OCI-LY7 (cell line): ENCODE measurements at regions of chr6 and their contacts with region 1.

Region 1: GRCh38 chr6:26270903-26271667 is 93.9 kb upstream of the BTN3A2 start:
- DNase-seq: peak; percentile 98
- H3K4me3 ChIP-seq: peak overlapping the region; percentile 87
- H3K27ac ChIP-seq: peak overlapping the region; percentile 99
- H3K4me1 ChIP-seq: peaks cover 42% of the 10 kb centered on the region
- CTCF ChIP-seq: no peak; the same call in 1 of the 2 replicates

Region 2: DNA sequence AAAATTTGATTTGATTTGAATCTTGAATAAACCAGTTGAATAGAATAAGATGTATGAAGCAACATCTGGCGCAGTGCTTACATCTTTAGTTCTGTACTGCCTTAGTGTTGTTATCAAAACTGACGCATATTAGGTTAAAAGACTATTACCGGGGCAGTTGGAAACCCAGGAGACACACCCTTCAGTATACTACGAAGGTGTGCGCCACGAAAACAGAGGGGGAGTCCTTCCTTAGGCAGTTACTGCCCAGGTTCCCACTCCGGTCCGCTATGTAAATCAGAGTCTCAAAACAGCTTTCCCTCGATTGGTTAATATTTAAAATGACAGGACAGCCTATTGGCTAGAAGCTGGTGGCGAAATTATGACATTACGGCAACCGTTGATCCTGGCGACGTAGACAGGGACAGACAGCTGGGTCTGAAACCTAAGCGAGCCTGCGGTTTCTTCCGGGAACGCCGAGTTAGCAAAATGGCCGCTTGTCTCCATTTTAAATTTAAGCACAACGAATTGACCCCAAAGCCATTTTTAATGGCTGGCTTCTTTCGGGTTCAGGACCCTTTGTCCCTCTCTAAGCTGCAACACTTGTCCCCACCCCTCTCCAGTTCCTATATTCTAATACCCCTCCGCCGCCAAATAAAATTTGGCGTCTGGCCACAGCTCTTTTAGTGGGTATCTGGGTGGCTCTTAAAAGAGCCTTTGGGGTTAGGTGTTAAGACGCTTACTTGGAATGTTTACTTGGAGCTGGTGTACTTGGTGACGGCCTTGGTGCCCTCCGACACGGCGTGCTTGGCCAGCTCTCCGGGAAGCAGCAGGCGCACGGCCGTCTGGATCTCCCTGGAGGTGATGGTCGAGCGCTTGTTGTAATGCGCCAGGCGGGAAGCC is 148.1 kb before region 1 on chr6:
- CTCF ChIA-PET with region 1: no interaction called
- POLR2A ChIA-PET with region 1: interaction called, 19 read pairs
- intact Hi-C with region 1: loop called (anchors 2 kb)
- DNase-seq: peak; percentile 99
- H3K4me3 ChIP-seq: peak overlapping the region; percentile 72
- H3K27ac ChIP-seq: peak overlapping the region; percentile 99
- H3K4me1 ChIP-seq: peaks cover 60% of the 10 kb centered on the region
- CTCF ChIP-seq: no peak

Region 3: GRCh38 chr6:26204332-26205165 is 66.5 kb before region 1 on chr6:
- CTCF ChIA-PET with region 1: no interaction called
- POLR2A ChIA-PET with region 1: interaction called, 307 read pairs
- intact Hi-C with region 1: loop called (anchors 5 kb)
- DNase-seq: peak; percentile 98
- H3K4me3 ChIP-seq: peak overlapping the region; percentile 79
- H3K27ac ChIP-seq: peak overlapping the region; percentile 93
- H3K4me1 ChIP-seq: peaks cover 63% of the 10 kb centered on the region
- CTCF ChIP-seq: peak; percentile 61

Region 4: GRCh38 chr6:26234421-26235296 is 36.4 kb before region 1 on chr6:
- CTCF ChIA-PET with region 1: no interaction called
- POLR2A ChIA-PET with region 1: interaction called, 244 read pairs
- intact Hi-C with region 1: loop called (anchors 1 kb)
- DNase-seq: peak; percentile 90
- H3K4me3 ChIP-seq: peak overlapping the region; percentile 69
- H3K27ac ChIP-seq: peak overlapping the region; percentile 92
- H3K4me1 ChIP-seq: peaks cover 26% of the 10 kb centered on the region
- CTCF ChIP-seq: no peak

Region 5: GRCh38 chr6:26351544-26351953 is 80.5 kb after region 1 on chr6:
- CTCF ChIA-PET with region 1: no interaction called
- POLR2A ChIA-PET with region 1: no interaction called
- intact Hi-C with region 1: no loop called
- DNase-seq: no peak
- H3K4me3 ChIP-seq: no peak overlapping the region
- H3K27ac ChIP-seq: no peak overlapping the region
- H3K4me1 ChIP-seq: peaks cover 66% of the 10 kb centered on the region
- CTCF ChIP-seq: no peak

Region 6: DNA sequence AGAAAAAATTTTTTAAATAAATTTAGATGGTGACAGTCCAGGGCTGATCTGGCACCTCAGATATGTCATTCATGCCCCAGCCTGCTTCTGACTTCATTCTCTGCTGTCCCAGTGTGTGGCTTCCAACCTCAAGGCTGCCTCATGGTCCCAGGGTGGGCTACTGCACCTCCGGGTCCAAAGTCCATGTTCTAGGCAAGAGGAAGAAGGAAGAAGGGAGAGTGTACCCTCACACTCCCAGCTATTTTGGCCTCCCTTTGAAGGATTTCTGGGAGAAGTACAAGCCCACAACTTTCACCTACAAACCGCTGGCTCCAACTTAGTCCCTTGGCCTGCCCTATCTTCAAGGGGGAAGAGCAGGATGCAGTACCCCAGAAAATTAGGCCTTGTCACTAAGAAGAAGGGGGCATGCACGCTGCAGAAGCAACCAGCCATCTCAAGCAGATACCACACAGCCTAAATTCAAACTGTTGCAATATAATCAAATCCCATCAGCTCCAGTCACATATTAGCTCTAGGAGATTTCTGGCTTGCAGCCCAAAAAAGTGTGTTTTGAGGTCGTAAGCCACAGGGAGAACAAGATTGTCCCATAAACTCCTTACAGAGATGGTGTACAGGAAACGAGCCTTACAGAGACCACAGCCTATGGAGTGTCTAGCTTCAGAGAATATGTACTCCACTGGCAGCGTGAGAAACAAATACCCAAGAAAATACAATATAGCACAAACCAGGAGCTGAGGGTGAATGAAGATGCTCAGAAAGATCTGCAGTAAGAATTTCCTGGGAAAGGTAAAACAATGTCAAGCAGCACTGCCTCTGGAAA is 93.0 kb after region 1 on chr6:
- CTCF ChIA-PET with region 1: no interaction called
- POLR2A ChIA-PET with region 1: interaction called, 20 read pairs
- intact Hi-C with region 1: loop called (anchors 5 kb)
- DNase-seq: peak; percentile 52
- H3K4me3 ChIP-seq: peak overlapping the region; percentile 77
- H3K27ac ChIP-seq: peak overlapping the region; percentile 96
- H3K4me1 ChIP-seq: peaks cover 70% of the 10 kb centered on the region
- CTCF ChIP-seq: no peak

Region 7: GRCh38 chr6:27838058-27838944 is 1567.2 kb after region 1 on chr6:
- CTCF ChIA-PET with region 1: no interaction called
- POLR2A ChIA-PET with region 1: no interaction called
- intact Hi-C with region 1: loop called (anchors 10 kb)
- DNase-seq: peak; percentile 99
- H3K4me3 ChIP-seq: peak overlapping the region; percentile 87
- H3K27ac ChIP-seq: peak overlapping the region; percentile 97
- H3K4me1 ChIP-seq: peaks cover 37% of the 10 kb centered on the region
- CTCF ChIP-seq: no peak